ENCODE measurements at regions of chr11 and their contacts with region 1.

Region 1: GRCh38 chr11:64331557-64332371 is 8.2 kb upstream of the CCDC88B start:
- DNase-seq: peak; percentile 96
- ATAC-seq: peak; percentile 95
- H3K4me3 Mint-ChIP-seq: peak overlapping the region; percentile 16
- H3K27ac Mint-ChIP-seq: peak overlapping the region; percentile 83
- H3K4me1 Mint-ChIP-seq: peaks cover 48% of the 10 kb centered on the region
- H3K27me3 Mint-ChIP-seq: no peaks in the 10 kb centered on the region

Region 2: GRCh38 chr11:64283092-64283784 is 48.5 kb before region 1 on chr11:
- CTCF ChIA-PET with region 1: no interaction called
- DNase-seq: no peak
- ATAC-seq: no peak
- H3K4me3 Mint-ChIP-seq: peak overlapping the region; percentile 79
- H3K27ac Mint-ChIP-seq: peak overlapping the region; percentile 33
- H3K4me1 Mint-ChIP-seq: peaks cover 18% of the 10 kb centered on the region
- H3K27me3 Mint-ChIP-seq: no peaks in the 10 kb centered on the region

Region 3: GRCh38 chr11:64312947-64313346 is 18.8 kb before region 1 on chr11:
- CTCF ChIA-PET with region 1: interaction called, 140 read pairs
- DNase-seq: no peak
- ATAC-seq: no peak
- H3K4me3 Mint-ChIP-seq: no peak overlapping the region
- H3K27ac Mint-ChIP-seq: peak overlapping the region; percentile 77
- H3K4me1 Mint-ChIP-seq: peaks cover 42% of the 10 kb centered on the region
- H3K27me3 Mint-ChIP-seq: no peaks in the 10 kb centered on the region

Region 4: DNA sequence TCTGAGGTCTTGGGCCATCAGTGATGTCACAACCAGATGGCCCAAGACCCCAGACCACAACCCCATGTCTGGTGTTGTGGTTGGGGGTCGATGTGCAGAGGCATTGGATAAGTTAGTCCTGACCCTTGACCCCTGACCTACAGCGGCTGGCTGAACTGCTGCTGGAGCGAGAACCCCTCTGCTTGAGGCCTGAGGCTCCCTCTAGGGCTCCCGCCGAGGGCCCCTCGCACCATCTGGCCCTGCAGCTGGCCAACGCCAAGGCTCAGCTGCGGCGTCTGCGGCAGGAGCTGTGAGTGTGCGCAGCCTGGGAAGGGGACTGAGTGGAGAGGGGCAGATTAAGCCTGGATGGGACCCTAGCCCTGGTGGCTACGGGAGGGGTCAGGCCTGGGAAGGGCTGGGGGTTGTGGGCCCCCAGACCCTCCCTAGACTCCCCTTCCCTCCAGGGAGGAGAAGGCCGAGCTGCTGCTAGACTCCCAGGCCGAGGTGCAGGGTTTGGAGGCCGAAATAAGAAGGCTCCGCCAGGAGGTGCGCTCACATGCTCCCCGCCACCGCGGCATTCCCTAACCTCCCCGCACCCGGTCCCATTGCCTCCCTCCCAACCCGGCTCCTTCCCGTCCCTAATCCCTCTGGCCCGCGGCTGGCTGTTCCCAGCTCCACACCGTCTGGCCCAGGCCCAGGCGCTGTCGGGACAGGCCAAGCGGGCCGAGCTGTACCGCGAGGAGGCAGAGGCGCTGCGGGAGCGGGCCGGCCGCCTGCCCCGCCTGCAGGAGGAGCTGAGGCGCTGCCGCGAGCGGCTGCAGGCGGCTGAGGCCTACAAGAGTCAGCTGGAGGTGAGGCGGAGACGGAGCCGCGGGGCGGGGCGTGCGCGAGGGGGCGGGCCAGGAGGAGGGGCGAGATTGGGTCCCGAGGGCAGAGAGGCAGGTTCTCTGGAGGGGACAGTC is 10.4 kb after region 1 on chr11:
- CTCF ChIA-PET with region 1: interaction called, 51 read pairs
- DNase-seq: peak; percentile 95
- ATAC-seq: peak; percentile 78
- H3K4me3 Mint-ChIP-seq: peak overlapping the region; percentile 30
- H3K27ac Mint-ChIP-seq: no peak overlapping the region
- H3K4me1 Mint-ChIP-seq: peaks cover 50% of the 10 kb centered on the region
- H3K27me3 Mint-ChIP-seq: no peaks in the 10 kb centered on the region

Region 5: DNA sequence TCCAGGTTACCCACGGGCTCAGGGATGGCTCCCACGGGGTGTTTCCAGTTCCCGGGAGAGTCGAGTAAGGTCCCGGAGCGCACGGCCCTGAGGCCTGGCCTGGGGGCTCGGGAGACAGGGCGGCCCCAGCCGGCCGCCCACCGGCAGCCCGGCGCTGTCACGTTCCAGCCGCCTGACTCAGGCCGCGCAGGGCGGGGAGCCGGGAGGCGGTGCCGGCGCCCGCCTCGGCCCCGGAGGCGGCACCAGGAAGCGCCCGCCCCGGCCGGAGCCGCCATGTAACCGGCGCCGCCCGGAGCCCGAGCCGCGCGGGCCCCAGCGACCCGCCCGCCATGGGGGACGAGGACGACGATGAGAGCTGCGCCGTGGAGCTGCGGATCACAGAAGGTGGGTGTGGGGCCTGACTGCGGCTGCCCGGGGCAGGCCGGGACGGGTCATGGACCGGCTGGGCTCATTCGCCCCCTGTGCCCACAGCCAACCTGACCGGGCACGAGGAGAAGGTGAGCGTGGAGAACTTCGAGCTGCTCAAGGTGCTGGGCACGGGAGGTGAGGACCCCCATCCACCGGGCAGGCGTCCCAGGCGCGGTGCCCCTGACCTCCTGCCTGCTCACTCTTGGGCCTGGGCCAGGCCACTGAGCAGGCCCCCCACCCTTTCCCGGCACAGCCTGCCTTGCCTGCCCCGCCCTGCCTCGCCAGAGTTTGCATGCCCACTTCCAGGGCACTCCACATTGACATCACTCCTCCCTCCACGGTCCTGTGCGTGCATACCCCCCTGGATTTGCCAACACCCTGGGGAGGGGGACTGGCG is 27.3 kb after region 1 on chr11 and contains the start of gene RPS6KA4:
- CTCF ChIA-PET with region 1: interaction called, 22 read pairs
- DNase-seq: no peak
- ATAC-seq: peak; percentile 91
- H3K4me3 Mint-ChIP-seq: peak within 1 kb of the TSS; percentile 86
- H3K27ac Mint-ChIP-seq: peak within 1 kb of the TSS; percentile 81
- H3K4me1 Mint-ChIP-seq: peaks cover 41% of the 10 kb centered on the region
- H3K27me3 Mint-ChIP-seq: no peaks in the 10 kb centered on the region
- total RNA-seq, gene RPS6KA4: 31.1 to 41.9 TPM